Activated B cell treated with CpG ODN at 0.5 μM for 24 hours (primary cell): ENCODE measurements at regions of chr6 and their contacts with region 1.

Region 1: DNA sequence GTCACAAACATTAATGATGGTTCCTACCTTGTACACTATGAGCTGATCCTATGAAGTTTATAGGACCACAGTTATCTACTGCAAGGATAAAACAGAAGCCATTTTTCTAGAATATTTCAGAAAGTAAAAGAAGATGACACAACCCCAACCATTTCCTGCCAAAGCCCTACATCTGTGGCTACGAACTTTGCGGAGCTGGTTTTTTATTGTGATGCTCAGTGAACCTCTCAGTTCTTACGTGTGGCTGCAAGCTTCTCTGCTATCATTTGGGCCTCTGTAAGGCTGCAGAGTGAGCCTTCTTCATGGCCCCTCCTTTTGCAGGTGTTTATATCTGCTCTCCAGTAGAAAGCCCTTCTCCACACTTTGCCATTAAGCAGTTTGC is 17.8 kb upstream of the TAGAP start:
- DNase-seq: no peak
- ATAC-seq: peak; percentile 87
- H3K4me3 Mint-ChIP-seq: peak overlapping the region; percentile 50
- H3K27ac Mint-ChIP-seq: peak overlapping the region; percentile 95
- H3K4me1 Mint-ChIP-seq: peaks cover 73% of the 10 kb centered on the region
- H3K27me3 Mint-ChIP-seq: no peaks in the 10 kb centered on the region
- CTCF ChIP-seq: no peak

Region 2: GRCh38 chr6:159074120-159074684 is 11.6 kb after region 1 on chr6:
- CTCF ChIA-PET with region 1: interaction called, 6 read pairs
- POLR2A ChIA-PET with region 1: interaction called, 11 read pairs
- intact Hi-C with region 1: no loop called
- DNase-seq: no peak
- ATAC-seq: no peak
- H3K4me3 Mint-ChIP-seq: peak overlapping the region; percentile 70
- H3K27ac Mint-ChIP-seq: peak overlapping the region; percentile 36
- H3K4me1 Mint-ChIP-seq: peaks cover 41% of the 10 kb centered on the region
- H3K27me3 Mint-ChIP-seq: no peaks in the 10 kb centered on the region
- CTCF ChIP-seq: no peak

Region 3: GRCh38 chr6:159084493-159085091 is 22.0 kb after region 1 on chr6:
- CTCF ChIA-PET with region 1: interaction called, 6 read pairs
- POLR2A ChIA-PET with region 1: interaction called, 74 read pairs
- intact Hi-C with region 1: loop called (anchors 1 kb)
- DNase-seq: no peak
- ATAC-seq: no peak
- H3K4me3 Mint-ChIP-seq: no peak overlapping the region
- H3K27ac Mint-ChIP-seq: no peak overlapping the region
- H3K4me1 Mint-ChIP-seq: peaks cover 30% of the 10 kb centered on the region
- H3K27me3 Mint-ChIP-seq: no peaks in the 10 kb centered on the region
- CTCF ChIP-seq: no peak